Activated naive CD4-positive, alpha-beta T cell treated with anti-CD3 and anti-CD28 coated beads for 36 hours (primary cell): ENCODE measurements at regions of chr15 and their contacts with region 1.

Region 1: GRCh38 chr15:90954712-90955671 is at the start of gene RCCD1:
- DNase-seq: peak; percentile 95
- H3K4me3 Mint-ChIP-seq: peak within 1 kb of the TSS; percentile 86
- H3K27ac Mint-ChIP-seq: peak within 1 kb of the TSS; percentile 93
- H3K4me1 Mint-ChIP-seq: peaks cover 12% of the 10 kb centered on the region
- H3K27me3 Mint-ChIP-seq: no peaks in the 10 kb centered on the region
- total RNA-seq, gene RCCD1: 52.0 to 52.4 TPM

Region 2: DNA sequence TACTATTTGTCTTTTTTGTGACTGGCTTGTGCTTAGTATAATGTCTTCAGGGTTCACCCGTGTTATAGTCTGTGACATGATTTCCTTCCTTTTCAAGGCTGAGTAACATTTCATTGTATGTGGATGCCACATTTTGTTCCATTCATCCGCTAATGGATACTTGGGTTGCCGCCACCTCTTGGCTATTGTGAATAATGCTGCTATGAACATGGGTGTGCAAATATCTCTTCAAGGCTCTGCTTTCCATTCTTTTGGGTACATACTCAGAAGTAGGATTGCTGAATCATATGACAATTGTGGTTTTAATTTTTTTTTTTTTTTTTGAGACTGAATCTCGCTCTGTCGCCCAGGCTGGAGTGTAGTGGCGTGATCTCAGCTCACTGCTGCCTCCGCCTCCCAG is 409.9 kb before region 1 on chr15:
- CTCF ChIA-PET with region 1: no interaction called
- intact Hi-C with region 1: no loop called
- DNase-seq: peak; percentile 40
- H3K4me3 Mint-ChIP-seq: no peak overlapping the region
- H3K27ac Mint-ChIP-seq: no peak overlapping the region
- H3K4me1 Mint-ChIP-seq: peaks cover 67% of the 10 kb centered on the region
- H3K27me3 Mint-ChIP-seq: no peaks in the 10 kb centered on the region

Region 3: DNA sequence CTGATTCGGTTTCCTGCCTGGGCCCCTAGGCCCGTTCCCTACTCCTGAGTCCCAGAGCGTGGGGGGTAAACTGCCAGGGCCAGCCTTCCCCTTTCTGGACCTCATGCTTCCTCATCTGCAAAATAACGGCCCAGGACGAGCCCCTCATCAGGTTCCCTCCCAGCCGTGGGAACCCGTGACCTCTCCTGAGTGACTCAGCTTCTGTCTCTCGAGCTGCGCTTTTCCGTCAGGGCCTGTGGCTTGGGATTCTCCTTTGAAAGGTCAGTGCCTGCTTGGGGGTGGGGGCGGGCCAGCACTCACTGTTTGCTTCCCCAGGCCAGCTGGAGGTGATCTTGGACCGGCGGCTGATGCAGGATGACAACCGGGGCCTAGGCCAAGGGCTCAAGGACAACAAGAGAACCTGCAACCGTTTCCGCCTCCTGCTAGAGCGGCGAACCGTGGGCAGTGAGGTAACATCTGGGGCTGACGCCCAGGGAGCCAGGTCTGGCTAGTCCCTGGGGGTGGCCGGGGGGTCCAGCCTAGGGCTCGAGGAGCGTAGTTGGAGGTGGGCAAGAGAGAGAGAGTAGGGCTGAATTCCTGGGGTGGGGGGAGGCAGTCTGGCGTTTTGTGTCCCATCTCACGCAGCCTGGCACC is 39.1 kb before region 1 on chr15:
- CTCF ChIA-PET with region 1: no interaction called
- intact Hi-C with region 1: no loop called
- DNase-seq: no peak
- H3K4me3 Mint-ChIP-seq: no peak overlapping the region
- H3K27ac Mint-ChIP-seq: no peak overlapping the region
- H3K4me1 Mint-ChIP-seq: no peaks in the 10 kb centered on the region
- H3K27me3 Mint-ChIP-seq: no peaks in the 10 kb centered on the region

Region 4: DNA sequence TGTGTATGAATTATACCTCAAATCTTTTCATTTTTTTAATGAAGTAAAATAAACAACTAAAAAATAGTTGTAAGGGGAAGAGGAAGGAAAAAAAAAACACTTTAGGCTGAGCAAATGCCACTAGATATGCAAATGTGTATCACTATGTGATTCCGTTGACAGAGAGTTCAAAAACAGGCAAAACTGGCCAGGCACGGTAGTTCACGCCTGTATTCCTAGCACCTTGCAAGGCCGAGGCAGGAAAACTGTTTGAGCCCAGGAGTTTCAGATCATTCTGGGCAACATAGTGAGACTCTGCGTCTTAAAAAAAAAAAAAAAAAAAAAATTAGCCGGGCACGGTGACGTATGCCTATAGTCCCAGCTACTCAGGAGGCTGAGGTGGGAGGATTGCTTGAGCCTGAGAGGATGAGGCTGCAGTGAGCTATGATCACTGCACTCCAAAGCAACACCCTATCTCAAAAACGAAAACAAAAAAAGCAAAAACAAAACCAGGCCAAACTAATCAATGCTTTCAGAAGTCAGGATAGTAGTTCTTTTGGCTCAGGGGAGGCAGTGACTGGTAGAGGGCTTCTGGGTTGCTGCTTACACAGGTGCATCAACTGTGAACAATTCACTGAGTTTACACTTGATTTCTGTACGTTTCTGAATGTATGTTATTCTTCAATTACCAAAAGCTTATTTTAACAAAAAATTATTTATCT is 32.0 kb after region 1 on chr15:
- CTCF ChIA-PET with region 1: interaction called, 14 read pairs
- intact Hi-C with region 1: no loop called
- DNase-seq: no peak
- H3K4me3 Mint-ChIP-seq: no peak overlapping the region
- H3K27ac Mint-ChIP-seq: no peak overlapping the region
- H3K4me1 Mint-ChIP-seq: peaks cover 23% of the 10 kb centered on the region
- H3K27me3 Mint-ChIP-seq: no peaks in the 10 kb centered on the region

Region 5: GRCh38 chr15:90994417-90995311 is 39.7 kb after region 1 on chr15 and contains the start of gene PRC1:
- CTCF ChIA-PET with region 1: interaction called, 5 read pairs
- intact Hi-C with region 1: loop called (anchors 1 kb)
- DNase-seq: peak; percentile 99
- H3K4me3 Mint-ChIP-seq: peak within 1 kb of the TSS; percentile 100
- H3K27ac Mint-ChIP-seq: peak within 1 kb of the TSS; percentile 98
- H3K4me1 Mint-ChIP-seq: peaks cover 24% of the 10 kb centered on the region
- H3K27me3 Mint-ChIP-seq: no peaks in the 10 kb centered on the region
- total RNA-seq, gene PRC1: 173 TPM

Region 6: DNA sequence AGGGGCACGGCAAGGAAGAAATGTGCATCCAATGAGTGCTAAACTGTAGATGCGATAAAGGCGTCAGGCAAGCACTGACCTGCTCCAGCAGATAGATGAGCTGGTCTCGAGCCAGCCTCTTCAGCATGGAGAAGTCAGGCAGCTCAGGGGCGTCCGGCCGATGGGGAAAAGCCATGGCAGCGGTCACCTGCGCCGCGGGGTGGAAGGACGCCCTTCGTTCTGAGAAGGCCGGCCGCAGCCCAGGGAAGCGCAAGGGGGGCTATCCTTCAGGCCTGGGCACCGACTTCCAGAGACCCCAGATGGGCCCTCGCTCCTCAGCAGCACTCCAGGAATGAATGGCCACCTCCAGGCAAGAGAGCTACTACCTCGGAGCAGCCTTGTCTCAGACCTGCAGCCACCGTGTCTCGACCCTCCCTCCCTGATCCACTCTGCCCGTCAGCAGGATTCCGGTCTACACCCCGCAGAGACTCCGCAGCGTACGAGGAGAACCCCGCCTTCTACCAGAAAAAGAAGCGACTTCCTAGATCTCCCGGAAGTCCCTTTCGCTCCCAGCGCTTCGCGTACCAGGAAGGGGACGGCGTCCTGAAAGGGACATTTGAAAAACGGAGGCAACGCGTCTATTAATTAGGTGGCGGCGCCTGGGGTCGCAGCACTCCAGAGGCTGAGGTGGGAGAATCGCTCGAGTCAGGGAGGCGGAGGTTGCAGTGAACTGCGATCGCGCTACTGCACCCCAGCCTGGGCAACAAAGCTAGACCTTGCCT is 67.3 kb after region 1 on chr15 and contains the start of gene VPS33B:
- CTCF ChIA-PET with region 1: interaction called, 3 read pairs
- intact Hi-C with region 1: loop called (anchors 1 kb)
- DNase-seq: peak; percentile 88
- H3K4me3 Mint-ChIP-seq: peak within 1 kb of the TSS; percentile 87
- H3K27ac Mint-ChIP-seq: peak within 1 kb of the TSS; percentile 89
- H3K4me1 Mint-ChIP-seq: peaks cover 34% of the 10 kb centered on the region
- H3K27me3 Mint-ChIP-seq: no peaks in the 10 kb centered on the region
- total RNA-seq, gene VPS33B: 19.8 to 21.2 TPM

Region 7: DNA sequence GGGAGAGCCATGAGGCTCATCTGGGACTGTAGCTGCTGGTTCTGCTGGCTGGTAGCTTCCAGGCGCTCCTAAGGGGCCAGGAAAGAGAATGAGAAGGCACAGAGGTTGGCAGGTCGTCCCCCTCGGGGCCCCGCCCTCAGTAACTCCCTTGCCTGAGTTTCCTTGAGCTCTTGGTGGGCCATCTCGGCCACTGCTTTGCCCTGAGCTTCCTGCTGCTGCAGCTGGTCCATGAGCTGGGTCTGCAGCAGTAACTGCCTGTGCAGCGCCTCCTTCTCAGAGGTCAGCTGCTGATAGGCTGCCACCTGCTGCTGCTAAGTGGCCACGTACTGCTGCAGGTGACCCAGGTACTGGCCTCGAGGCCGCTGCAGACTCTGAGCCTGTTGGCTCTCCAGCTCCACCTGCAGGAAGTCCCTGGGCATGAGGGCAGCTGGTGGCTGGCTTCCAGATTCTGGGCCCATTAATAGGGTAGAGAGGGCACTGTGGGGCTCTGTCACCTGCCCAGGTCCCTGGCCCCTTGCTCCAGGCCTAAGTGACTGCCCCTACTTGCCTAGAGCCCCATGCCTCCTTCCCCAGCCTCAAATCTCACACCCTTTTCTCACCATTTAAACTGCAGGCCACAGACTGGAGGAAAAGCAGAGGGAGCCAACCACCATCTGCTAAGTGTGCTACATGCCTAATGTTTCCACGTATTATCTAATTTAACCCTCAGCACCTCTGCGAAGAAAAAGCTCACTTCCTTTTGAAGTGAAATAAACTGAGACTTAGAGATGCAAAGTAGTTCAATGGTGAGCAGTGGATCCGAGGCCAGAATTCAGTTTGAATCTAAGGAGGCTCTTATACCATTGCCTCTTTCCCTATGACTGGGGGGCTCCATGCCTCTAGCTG is 78.2 kb after region 1 on chr15:
- CTCF ChIA-PET with region 1: interaction called, 24 read pairs
- intact Hi-C with region 1: loop called (anchors 1 kb)
- DNase-seq: peak; percentile 79
- H3K4me3 Mint-ChIP-seq: no peak overlapping the region
- H3K27ac Mint-ChIP-seq: no peak overlapping the region
- H3K4me1 Mint-ChIP-seq: no peaks in the 10 kb centered on the region
- H3K27me3 Mint-ChIP-seq: no peaks in the 10 kb centered on the region

Region 8: DNA sequence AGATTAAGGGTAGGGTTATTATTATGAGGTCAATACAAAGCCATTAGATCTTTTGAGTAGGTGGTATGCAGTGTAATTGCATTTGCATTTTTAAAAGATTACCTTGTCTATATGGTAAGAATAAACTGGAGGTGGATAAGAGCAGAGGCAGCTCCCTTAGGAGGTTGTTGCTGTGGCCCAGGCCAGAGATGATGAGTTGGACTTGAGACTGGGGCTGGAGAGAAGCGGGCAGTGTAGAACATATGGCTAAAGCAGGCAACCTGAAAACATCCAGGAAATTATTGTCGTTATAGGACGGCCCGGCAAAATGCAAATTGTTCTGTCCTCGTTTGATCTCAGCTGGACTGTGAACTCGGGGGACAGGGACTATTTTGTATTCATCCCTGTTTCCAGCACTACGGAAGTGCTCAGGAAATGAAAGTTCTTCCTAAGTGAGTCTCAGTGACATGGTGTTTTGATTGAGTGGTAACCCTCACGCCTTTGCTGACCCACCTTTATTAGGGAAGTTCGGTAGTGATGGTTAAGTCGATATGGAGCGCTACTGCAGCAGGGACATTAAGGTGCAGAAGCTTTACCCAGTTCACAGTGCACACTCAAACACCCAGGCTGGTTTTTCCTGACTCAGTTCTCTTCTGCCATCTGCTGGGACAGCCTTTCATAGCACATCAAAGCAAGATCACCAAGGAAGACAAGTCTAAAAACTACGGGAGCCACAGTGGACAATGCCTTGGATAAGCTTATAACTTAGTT is 94.6 kb after region 1 on chr15:
- CTCF ChIA-PET with region 1: interaction called, 20 read pairs
- intact Hi-C with region 1: loop called (anchors 1 kb)
- DNase-seq: peak; percentile 83
- H3K4me3 Mint-ChIP-seq: no peak overlapping the region
- H3K27ac Mint-ChIP-seq: no peak overlapping the region
- H3K4me1 Mint-ChIP-seq: peaks cover 19% of the 10 kb centered on the region
- H3K27me3 Mint-ChIP-seq: no peaks in the 10 kb centered on the region